ENCODE measurements at regions of chr1 and their contacts with region 1.

Region 1: DNA sequence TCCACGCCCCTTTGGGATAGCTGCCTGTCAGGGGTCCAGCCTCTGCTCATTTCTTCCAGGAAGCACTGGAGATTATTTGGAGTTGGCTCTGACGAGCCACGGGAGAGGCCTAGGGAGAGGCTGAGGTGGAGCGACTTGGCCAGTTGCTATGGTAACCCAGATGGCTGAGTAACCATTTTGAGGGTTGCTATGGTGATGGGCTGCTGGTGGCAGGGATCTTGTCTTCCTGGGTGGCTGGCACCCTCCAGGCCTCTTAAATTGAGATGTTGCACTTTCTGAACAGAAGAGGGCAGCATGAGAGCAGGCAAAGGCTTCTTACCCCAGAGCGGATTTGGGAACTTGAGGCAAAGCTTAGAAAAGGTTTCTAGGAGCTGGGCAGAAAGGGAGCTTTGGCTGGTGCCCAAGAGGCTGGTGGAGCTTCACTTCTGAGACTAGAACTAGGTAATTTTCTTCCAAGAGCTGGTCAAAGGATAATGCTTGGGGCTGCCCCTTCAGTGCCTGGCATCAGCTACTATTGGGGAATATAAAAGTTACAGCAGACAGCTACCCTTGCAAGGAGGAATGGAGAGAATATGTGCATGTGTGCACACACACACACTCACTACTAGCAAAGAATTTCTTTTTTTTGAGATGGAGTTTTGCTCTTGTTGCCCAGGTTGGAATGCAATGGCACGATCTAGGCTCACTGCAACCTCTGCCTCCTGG is 72.5 kb downstream of the NDUFS5 start:
- DNase-seq: peak; percentile 85
- ATAC-seq: peak; percentile 34
- H3K4me3 ChIP-seq: no peak overlapping the region
- H3K4me3 Mint-ChIP-seq: no peak overlapping the region
- H3K27ac ChIP-seq: no peak overlapping the region
- H3K27ac Mint-ChIP-seq: peak overlapping the region; percentile 6
- H3K4me1 ChIP-seq: peaks cover 17 to 23% of the 10 kb centered on the region in 2 donors
- H3K4me1 Mint-ChIP-seq: peaks cover 22% of the 10 kb centered on the region
- H3K27me3 ChIP-seq: no peaks in the 10 kb centered on the region
- H3K27me3 Mint-ChIP-seq: no peaks in the 10 kb centered on the region
- CTCF ChIP-seq: peak; percentile 79

Region 2: DNA sequence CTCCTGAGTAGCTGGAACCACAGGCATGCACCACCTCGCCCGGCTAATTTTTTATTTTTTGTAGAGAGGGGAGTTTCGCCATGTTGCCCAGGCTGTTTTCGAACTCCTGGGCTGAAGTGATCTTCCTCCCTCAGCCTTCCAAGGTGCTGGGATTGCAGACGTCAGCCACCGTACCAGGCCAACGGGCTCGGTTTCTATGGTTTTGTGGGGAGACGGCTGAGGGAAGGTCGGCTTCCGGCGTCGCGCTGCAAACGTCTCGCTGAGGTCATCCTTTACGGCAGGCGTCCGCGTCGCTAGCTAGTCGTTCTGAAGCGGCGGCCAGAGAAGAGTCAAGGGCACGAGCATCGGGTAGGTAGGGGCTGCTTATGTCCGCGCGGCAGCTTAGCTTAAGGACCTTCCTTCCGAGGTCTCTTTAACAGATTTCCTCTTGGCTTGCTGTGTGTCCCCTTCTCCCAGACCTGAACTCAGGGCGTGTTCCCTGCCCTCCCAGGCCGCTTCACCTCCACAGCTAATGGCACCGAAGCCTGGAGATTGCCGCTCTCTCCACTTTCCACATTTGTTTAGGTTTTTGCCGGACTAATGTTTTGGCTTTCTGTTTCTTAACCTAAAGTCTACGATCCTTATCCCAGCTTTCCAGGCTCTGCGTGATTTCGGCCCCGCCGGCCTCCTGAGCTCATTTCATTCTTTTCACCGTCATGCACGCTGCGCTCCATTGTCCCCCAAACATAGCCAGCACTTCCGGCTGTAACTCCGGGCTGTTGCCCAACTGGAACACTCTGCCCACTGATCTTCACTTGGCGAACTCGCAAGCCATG is 72.4 kb before region 1 on chr1 and contains the start of gene NDUFS5:
- CTCF ChIA-PET with region 1: no interaction called
- POLR2A ChIA-PET with region 1: no interaction called
- intact Hi-C with region 1: loop called (anchors 10 kb)
- DNase-seq: peak; percentile 88
- ATAC-seq: peak; percentile 91
- H3K4me3 ChIP-seq: peak within 1 kb of the TSS; percentile 85 to 98 (median 98)
- H3K4me3 Mint-ChIP-seq: peak within 1 kb of the TSS; percentile 89
- H3K27ac ChIP-seq: peak within 1 kb of the TSS; percentile 88 to 92
- H3K27ac Mint-ChIP-seq: peak within 1 kb of the TSS; percentile 86
- H3K4me1 ChIP-seq: peaks cover 10 to 16% of the 10 kb centered on the region in 2 donors
- H3K4me1 Mint-ChIP-seq: peaks cover 20% of the 10 kb centered on the region
- H3K27me3 ChIP-seq: no peaks in the 10 kb centered on the region
- H3K27me3 Mint-ChIP-seq: no peaks in the 10 kb centered on the region
- CTCF ChIP-seq: no peak
- total RNA-seq, gene NDUFS5: 47.2 and 55.8 TPM in 2 replicates

Region 3: DNA sequence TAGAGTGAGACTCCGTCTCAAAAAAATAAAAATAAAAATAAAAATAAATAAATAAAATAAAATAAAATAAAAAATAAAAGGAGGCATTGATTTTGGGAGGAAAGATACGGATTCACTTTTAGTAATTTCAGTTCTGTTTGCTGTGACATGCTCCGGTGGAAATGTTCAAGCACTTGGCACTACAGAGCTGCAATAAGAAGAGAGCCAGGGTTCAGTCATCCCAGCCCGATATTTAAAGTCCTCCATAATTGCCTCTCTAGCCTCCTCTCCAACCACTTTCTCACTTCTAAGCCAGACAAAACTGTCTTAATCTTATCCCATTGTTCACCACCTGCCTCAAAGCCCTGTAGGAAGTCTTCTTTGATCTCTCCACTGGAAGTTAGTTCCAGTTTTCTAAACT is 50.8 kb after region 1 on chr1:
- CTCF ChIA-PET with region 1: no interaction called
- POLR2A ChIA-PET with region 1: no interaction called
- intact Hi-C with region 1: no loop called
- DNase-seq: no peak
- ATAC-seq: no peak
- H3K4me3 ChIP-seq: no peak overlapping the region
- H3K4me3 Mint-ChIP-seq: no peak overlapping the region
- H3K27ac ChIP-seq: no peak overlapping the region
- H3K27ac Mint-ChIP-seq: no peak overlapping the region
- H3K4me1 ChIP-seq: no peaks in the 10 kb centered on the region
- H3K4me1 Mint-ChIP-seq: no peaks in the 10 kb centered on the region
- H3K27me3 ChIP-seq: no peaks in the 10 kb centered on the region
- H3K27me3 Mint-ChIP-seq: peaks cover 6% of the 10 kb centered on the region
- CTCF ChIP-seq: no peak

Region 4: DNA sequence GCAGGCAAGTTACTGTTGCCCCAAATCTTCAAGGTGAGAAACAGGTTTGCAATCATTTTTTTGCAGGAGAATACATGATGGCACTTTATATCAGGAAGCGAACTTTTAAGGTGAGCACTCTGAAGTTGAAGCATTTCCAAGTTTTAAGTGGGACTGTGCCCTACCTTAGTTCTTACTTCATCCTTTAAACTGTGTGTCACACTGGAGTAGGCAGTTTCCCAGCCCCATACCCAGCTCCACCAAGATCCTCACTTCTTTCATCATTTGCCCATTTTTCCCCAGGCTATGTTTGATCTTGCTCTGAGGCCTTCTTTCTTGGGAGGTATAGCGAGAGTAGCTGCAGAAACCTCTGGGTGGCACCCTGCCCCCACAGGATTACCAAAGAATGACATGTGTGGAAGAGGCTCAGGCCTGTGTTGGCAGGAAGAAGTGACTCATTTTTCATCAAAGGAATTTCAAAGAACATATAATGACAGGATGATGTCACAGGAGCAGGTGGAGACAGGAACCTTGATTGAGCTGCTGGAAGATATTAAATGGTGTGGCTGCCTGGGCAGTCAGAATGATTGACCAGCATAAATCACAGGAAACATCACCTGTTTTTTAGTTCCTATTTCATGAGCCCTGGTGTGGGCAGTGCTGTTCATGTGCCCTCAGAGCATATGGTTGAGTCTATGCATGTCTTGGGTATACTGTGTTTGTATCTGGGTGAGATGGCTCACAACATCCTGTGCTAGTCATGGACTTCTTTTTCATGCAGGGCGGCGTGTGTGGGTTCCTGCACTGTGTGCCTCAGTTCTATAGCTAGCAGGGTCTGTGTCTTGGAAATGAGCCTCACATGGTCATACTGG is 85.0 kb after region 1 on chr1:
- CTCF ChIA-PET with region 1: interaction called, 203 read pairs
- POLR2A ChIA-PET with region 1: no interaction called
- intact Hi-C with region 1: no loop called
- DNase-seq: peak; percentile 63
- ATAC-seq: peak; percentile 83
- H3K4me3 ChIP-seq: no peak overlapping the region
- H3K4me3 Mint-ChIP-seq: peak overlapping the region; percentile 13
- H3K27ac ChIP-seq: peak overlapping the region; percentile 46 to 75
- H3K27ac Mint-ChIP-seq: peak overlapping the region; percentile 69
- H3K4me1 ChIP-seq: peaks cover 12 to 13% of the 10 kb centered on the region in 2 donors
- H3K4me1 Mint-ChIP-seq: peaks cover 24% of the 10 kb centered on the region
- H3K27me3 ChIP-seq: no peaks in the 10 kb centered on the region
- H3K27me3 Mint-ChIP-seq: no peaks in the 10 kb centered on the region
- CTCF ChIP-seq: peak; percentile 72

Region 5: DNA sequence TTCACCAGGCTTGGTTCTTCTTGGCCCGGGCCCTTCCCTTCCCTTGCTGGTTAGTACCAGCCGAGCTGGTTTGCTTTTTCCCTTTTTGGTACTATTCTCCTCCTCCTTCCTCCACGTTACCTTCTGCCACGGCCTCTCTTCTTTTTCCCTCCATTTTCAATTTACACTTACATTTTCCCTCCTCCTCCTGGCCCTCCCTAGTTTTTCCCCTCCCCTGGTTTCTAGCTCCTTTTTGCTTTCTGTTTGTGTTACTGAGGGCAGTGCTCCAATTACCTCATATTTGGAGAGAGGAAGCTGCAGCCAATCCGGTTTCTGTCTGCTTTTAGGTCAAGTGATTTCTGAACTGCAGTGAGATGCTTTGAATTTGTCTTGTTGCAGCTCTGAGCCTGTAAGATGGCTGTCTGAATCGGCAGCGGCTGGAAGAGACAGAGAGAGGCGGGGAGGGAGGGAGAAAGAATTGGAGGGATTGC is 169.4 kb after region 1 on chr1:
- CTCF ChIA-PET with region 1: interaction called, 175 read pairs
- POLR2A ChIA-PET with region 1: no interaction called
- intact Hi-C with region 1: no loop called
- DNase-seq: peak; percentile 49
- ATAC-seq: no peak
- H3K4me3 ChIP-seq: peak overlapping the region in 3 of 5 experiments; percentile 12 to 47 (median 15)
- H3K4me3 Mint-ChIP-seq: peak overlapping the region; percentile 85
- H3K27ac ChIP-seq: peak overlapping the region; percentile 73 to 74
- H3K27ac Mint-ChIP-seq: peak overlapping the region; percentile 89
- H3K4me1 ChIP-seq: peaks cover 66 to 67% of the 10 kb centered on the region in 2 donors
- H3K4me1 Mint-ChIP-seq: peaks cover 65% of the 10 kb centered on the region
- H3K27me3 ChIP-seq: no peaks in the 10 kb centered on the region
- H3K27me3 Mint-ChIP-seq: no peaks in the 10 kb centered on the region
- CTCF ChIP-seq: no peak

Region 6: DNA sequence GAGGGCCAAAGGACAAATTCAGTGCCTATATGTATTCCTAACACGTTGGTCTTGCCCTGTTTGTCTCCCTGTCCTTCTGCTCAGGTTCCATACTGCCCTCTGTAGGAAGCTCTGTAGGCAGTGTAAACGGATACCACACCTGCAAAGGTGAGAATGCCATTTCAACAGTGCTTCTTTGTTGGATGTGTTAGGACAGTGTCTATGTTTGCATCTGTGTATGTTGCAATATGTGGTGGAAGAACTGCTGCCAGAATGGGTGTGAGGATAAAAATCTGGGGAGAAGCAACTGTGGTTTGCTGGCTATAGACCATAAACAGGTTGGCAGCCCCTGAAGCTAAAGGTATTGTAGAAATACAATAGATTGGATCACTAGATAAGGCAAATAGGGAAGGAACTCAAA is 279.7 kb after region 1 on chr1:
- CTCF ChIA-PET with region 1: interaction called, 24 read pairs
- POLR2A ChIA-PET with region 1: no interaction called
- intact Hi-C with region 1: no loop called
- DNase-seq: no peak
- ATAC-seq: no peak
- H3K4me3 ChIP-seq: no peak overlapping the region
- H3K4me3 Mint-ChIP-seq: no peak overlapping the region
- H3K27ac ChIP-seq: no peak overlapping the region
- H3K27ac Mint-ChIP-seq: no peak overlapping the region
- H3K4me1 ChIP-seq: no peaks in the 10 kb centered on the region
- H3K4me1 Mint-ChIP-seq: no peaks in the 10 kb centered on the region
- H3K27me3 ChIP-seq: no peaks in the 10 kb centered on the region
- H3K27me3 Mint-ChIP-seq: no peaks in the 10 kb centered on the region
- CTCF ChIP-seq: no peak

Region 7: DNA sequence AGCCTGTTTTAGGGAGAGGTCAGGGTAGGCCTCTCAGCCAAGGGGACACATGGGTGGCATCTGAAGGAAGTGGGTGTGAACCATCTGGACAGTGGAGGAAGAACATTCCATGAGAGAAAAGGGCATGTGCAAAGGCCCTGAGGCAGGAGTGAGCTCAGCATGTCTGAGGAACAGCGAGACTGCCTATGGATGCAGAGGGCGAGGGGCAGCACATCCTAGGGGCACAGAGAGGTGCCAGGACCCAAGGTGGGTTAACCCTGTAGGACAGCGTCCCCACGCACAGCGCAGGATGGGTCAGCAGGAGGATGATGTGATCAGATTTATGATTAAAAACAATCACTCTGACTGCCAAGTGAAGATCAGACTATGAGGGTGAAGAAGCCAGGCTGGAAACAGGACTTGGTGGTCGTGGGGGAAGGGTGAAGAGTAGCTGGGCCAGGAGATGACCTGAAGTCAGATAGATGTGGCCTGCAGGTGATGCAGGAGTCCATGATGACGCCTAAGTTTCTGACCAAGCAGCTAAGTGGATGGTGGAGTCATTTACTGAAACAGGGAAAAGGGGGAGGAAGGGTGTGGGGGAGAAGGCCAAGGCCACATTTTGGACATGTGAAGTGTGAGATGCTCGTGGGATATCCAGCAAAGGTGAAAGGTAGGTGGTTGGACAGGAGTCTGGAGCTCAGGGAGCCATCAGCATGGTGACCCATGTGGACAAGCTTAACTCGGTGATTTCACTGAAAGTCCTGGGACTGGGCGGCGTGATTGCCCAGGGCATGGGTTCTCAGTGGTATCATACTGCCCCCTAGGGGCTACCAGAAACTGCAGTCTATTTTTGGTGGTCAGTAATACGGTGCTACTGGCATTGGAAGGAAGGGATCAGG is 440.1 kb after region 1 on chr1:
- CTCF ChIA-PET with region 1: interaction called, 22 read pairs
- POLR2A ChIA-PET with region 1: no interaction called
- intact Hi-C with region 1: loop called (anchors 2 kb)
- DNase-seq: peak; percentile 72
- ATAC-seq: peak; percentile 78
- H3K4me3 ChIP-seq: no peak overlapping the region
- H3K4me3 Mint-ChIP-seq: no peak overlapping the region
- H3K27ac ChIP-seq: no peak overlapping the region
- H3K27ac Mint-ChIP-seq: no peak overlapping the region
- H3K4me1 ChIP-seq: peaks cover 20 to 27% of the 10 kb centered on the region in 2 donors
- H3K4me1 Mint-ChIP-seq: peaks cover 20% of the 10 kb centered on the region
- H3K27me3 ChIP-seq: no peaks in the 10 kb centered on the region
- H3K27me3 Mint-ChIP-seq: no peaks in the 10 kb centered on the region
- CTCF ChIP-seq: peak; percentile 91